ENCODE measurements at regions of chr2 and their contacts with region 1.

Region 1: GRCh38 chr2:204127238-204127637 is 190.7 kb downstream of the ICOS start:
- DNase-seq: no peak
- H3K4me3 ChIP-seq: no peak overlapping the region
- H3K27ac ChIP-seq: no peak overlapping the region
- H3K4me1 ChIP-seq: no peaks in the 10 kb centered on the region
- H3K27me3 ChIP-seq: no peaks in the 10 kb centered on the region
- CTCF ChIP-seq: no peak
- POLR2A ChIP-seq: no peak

Region 2: DNA sequence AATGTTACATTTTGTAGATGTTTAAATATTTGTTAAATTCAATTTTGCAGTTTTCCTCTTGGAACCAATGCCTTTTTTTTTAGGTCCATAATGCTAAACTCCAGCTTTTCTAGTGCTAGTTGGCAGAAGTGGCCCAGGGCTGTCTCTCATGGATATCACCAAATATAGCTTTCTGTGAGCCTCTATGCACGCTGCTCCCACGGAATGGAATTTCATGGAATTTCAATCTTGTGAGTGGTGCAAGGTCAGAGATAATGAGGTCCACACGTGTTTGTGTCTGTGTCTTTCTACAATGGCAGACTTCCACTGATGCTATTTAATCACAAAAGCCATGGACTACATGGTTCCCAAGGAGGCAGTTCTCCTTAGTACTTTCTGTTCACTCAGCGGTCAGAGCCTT is 226.6 kb after region 1 on chr2:
- intact Hi-C with region 1: loop called (anchors 10 kb)
- DNase-seq: no peak
- H3K4me3 ChIP-seq: no peak overlapping the region
- H3K27ac ChIP-seq: no peak overlapping the region
- H3K4me1 ChIP-seq: no peaks in the 10 kb centered on the region
- H3K27me3 ChIP-seq: no peaks in the 10 kb centered on the region
- CTCF ChIP-seq: no peak
- POLR2A ChIP-seq: no peak

Measured in breast epithelium (tissue), 4 donors.